CD4-positive, alpha-beta memory T cell (primary cell): ENCODE measurements at regions of chr5 and their contacts with region 1.

Region 1: GRCh38 chr5:143426437-143426991 is 23.0 kb upstream of the NR3C1 start:
- DNase-seq: no peak
- H3K4me3 ChIP-seq: no peak overlapping the region
- H3K4me3 Mint-ChIP-seq: peak overlapping the region in 2 of 8 donors; percentile 14 to 15
- H3K27ac ChIP-seq: no peak overlapping the region
- H3K27ac Mint-ChIP-seq: peak overlapping the region in 3 of 7 donors; percentile 5 to 19 (median 16)
- H3K4me1 ChIP-seq: peaks cover 27% of the 10 kb centered on the region
- H3K4me1 Mint-ChIP-seq: peaks cover 25 to 62% (median 43%) of the 10 kb centered on the region in 4 donors
- H3K27me3 ChIP-seq: no peaks in the 10 kb centered on the region
- H3K27me3 Mint-ChIP-seq: peaks cover 0 to 1% of the 10 kb centered on the region in 2 donors

Region 2: GRCh38 chr5:143413958-143414669 is 12.4 kb before region 1 on chr5:
- CTCF ChIA-PET with region 1: interaction called, 19 read pairs
- POLR2A ChIA-PET with region 1: interaction called, 125 read pairs
- intact Hi-C with region 1: no loop called
- DNase-seq: peak in 1 of 5 donors; percentile 44
- H3K4me3 ChIP-seq: no peak overlapping the region
- H3K4me3 Mint-ChIP-seq: peak overlapping the region; percentile 28 to 73 (median 63)
- H3K27ac ChIP-seq: peak overlapping the region; percentile 33
- H3K27ac Mint-ChIP-seq: peak overlapping the region; percentile 4 to 92 (median 72)
- H3K4me1 ChIP-seq: peaks cover 87% of the 10 kb centered on the region
- H3K4me1 Mint-ChIP-seq: peaks cover 30 to 64% (median 48%) of the 10 kb centered on the region in 4 donors
- H3K27me3 ChIP-seq: no peaks in the 10 kb centered on the region
- H3K27me3 Mint-ChIP-seq: no peaks in the 10 kb centered on the region

Region 3: GRCh38 chr5:143448518-143448917 is 22.0 kb after region 1 on chr5:
- CTCF ChIA-PET with region 1: no interaction called
- POLR2A ChIA-PET with region 1: no interaction called
- intact Hi-C with region 1: no loop called
- DNase-seq: peak in 4 of 5 donors; percentile 22 to 31 (median 26)
- H3K4me3 ChIP-seq: no peak overlapping the region
- H3K4me3 Mint-ChIP-seq: no peak overlapping the region
- H3K27ac ChIP-seq: no peak overlapping the region
- H3K27ac Mint-ChIP-seq: peak overlapping the region in 2 of 7 donors; percentile 56 to 57
- H3K4me1 ChIP-seq: peaks cover 11% of the 10 kb centered on the region
- H3K4me1 Mint-ChIP-seq: peaks cover 4 to 24% (median 12%) of the 10 kb centered on the region in 4 donors
- H3K27me3 ChIP-seq: no peaks in the 10 kb centered on the region
- H3K27me3 Mint-ChIP-seq: no peaks in the 10 kb centered on the region